H1 (cell line): ENCODE measurements at regions of chr16 and their contacts with region 1.

Region 1: DNA sequence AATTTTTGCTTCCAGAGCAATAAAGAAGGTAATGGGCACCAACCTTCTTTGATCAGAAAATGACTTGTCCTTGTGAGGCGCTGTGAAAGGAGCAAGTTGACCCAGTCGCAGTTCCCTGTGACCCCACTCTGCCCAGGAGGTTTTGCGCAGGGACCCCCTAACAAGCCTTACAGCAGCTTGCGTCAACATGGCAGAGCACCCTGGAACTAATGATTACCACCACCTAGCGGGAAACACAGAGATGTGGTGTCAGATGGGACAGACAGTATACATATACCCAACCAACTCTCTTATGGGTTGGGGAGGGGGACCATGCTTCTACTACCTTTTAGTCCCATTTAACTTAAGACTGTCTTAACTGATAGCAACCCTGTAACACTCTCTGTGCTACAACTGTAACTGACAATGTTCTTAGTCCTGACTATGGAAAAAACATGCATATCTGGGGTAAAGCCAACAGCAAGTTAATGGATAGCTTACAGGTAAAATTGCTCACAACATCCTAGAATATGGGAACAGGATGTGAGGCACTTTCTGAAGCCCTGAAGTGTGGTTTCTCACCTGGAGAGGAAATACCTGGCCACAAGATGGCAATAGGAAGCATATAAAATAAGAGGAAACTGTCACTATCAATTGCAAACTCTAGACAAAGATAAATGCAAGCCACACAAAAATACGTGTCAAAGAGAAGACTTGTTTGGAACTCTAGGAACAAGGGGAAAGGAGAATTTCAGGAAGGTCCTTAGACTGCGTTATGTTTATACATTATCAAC is 3.0 kb downstream of the KARS1 start:
- DNase-seq: no peak
- H3K4me3 ChIP-seq: no peak overlapping the region
- H3K27ac ChIP-seq: no peak overlapping the region
- H3K4me1 ChIP-seq: peaks cover 0 to 2% (median 0%) of the 10 kb centered on the region in 4 experiments; a peak in 2 of 7 replicates
- H3K27me3 ChIP-seq: no peaks in the 10 kb centered on the region
- CTCF ChIP-seq: no peak
- EP300 ChIP-seq: no peak
- POLR2A ChIP-seq: no peak
- RAD21 ChIP-seq: no peak

Region 2: DNA sequence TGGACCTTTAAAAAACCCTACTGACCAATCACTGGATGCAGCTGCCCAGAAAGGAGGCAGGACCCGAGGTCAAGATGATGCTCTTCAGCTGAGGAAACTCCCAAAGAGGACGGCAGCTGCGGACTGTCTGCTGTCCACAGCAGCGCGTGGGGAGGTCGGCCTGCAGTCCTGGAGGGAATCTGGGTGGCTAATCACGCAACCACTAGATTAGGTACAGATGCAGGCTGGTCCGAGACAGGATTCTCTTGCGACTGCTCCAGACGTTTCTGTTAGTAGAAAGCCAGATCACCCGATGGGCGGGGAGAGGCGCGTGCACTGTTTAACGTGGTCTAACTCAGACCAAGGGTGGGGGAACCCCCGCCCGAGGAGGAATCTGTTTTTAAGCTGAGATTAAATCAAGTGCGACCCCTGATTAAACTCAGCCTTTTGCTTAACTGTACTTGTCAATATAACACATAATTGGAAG is 446.3 kb before region 1 on chr16:
- CTCF ChIA-PET with region 1: no interaction called
- POLR2A ChIA-PET with region 1: no interaction called
- DNase-seq: no peak
- H3K4me3 ChIP-seq: no peak overlapping the region
- H3K27ac ChIP-seq: no peak overlapping the region
- H3K4me1 ChIP-seq: peaks cover 0 to 2% (median 0%) of the 10 kb centered on the region in 4 experiments; a peak in 3 of 7 replicates
- H3K27me3 ChIP-seq: no peaks in the 10 kb centered on the region
- CTCF ChIP-seq: no peak
- EP300 ChIP-seq: no peak
- POLR2A ChIP-seq: no peak
- RAD21 ChIP-seq: no peak

Region 3: DNA sequence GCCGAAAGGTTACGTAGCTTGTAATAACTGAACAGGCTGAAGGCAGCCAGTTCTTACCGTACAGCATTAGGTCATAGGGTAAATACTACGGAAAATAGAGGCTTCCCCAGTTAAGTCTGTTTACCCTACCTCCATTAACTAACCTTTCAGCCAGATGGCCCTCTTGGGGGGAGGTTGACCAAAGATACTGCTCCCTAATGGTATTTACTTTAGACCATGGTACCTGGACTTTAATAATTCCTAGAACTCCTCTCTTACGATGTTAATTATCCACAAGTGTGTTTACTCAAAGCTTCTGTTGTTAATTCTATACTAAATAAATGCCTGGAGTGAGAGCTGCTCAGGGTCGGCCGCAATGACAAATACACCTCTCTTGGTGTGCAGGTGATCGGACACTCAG is 11.6 kb before region 1 on chr16:
- CTCF ChIA-PET with region 1: no interaction called
- POLR2A ChIA-PET with region 1: interaction called, 14 read pairs
- DNase-seq: no peak
- H3K4me3 ChIP-seq: no peak overlapping the region
- H3K27ac ChIP-seq: no peak overlapping the region
- H3K4me1 ChIP-seq: no peaks in the 10 kb centered on the region
- H3K27me3 ChIP-seq: peaks cover 0 to 1% (median 0%) of the 10 kb centered on the region in 4 experiments; a peak in 1 of 7 replicates
- CTCF ChIP-seq: no peak
- EP300 ChIP-seq: no peak
- POLR2A ChIP-seq: no peak
- RAD21 ChIP-seq: no peak